ENCODE measurements at regions of chr5 and their contacts with region 1.

Region 1: DNA sequence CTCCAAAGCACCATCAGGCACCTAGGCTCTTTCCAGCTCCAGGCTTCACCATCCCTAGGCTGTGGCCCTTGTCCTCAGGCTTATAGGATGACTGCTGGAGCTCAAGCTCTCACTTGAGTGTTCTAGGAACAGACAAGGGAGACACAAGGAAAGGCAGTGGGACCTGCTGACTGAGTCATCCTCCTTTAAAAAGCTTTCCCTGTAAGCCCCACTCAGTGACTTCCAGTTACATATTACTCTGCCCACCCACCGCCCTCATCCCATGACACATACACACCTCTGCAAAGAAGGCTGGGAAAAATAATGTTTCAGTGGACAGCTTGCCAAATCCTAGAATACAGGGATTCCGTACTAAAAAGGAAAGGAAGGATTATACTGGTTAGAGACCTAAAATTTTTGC is 154.2 kb upstream of the ZNF366 start:
- DNase-seq: no peak
- H3K4me3 ChIP-seq: no peak overlapping the region
- H3K27ac ChIP-seq: no peak overlapping the region
- H3K4me1 ChIP-seq: no peaks in the 10 kb centered on the region
- H3K27me3 ChIP-seq: peaks cover 6 to 16% of the 10 kb centered on the region in 2 experiments
- CTCF ChIP-seq: no peak
- POLR2A ChIP-seq: no peak

Region 2: DNA sequence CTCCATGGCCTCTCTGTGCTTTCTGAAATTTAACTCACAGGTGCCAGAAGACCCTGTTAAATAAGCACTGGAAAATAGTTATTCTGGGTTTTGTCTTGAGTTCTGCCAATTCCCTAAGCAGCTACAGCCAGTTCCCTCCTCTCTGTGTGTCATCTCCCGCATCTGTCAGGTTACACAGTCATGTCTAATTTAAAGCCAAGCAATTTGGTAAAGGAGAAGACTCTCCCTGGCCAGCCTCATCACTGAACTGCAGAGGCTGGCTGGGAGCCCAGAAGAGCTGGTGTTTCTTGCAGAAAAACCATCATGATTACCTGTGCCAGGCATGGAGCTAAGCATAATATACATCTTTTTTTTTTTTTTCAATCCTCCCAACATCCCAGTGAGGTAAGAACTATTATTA is 12.9 kb before region 1 on chr5:
- CTCF ChIA-PET with region 1: interaction called, 10 read pairs
- POLR2A ChIA-PET with region 1: no interaction called
- dilution Hi-C with region 1: no loop called
- intact Hi-C with region 1: no loop called
- DNase-seq: no peak
- H3K4me3 ChIP-seq: no peak overlapping the region
- H3K27ac ChIP-seq: no peak overlapping the region
- H3K4me1 ChIP-seq: no peaks in the 10 kb centered on the region
- H3K27me3 ChIP-seq: no peaks in the 10 kb centered on the region
- CTCF ChIP-seq: no peak
- POLR2A ChIP-seq: no peak

Region 3: DNA sequence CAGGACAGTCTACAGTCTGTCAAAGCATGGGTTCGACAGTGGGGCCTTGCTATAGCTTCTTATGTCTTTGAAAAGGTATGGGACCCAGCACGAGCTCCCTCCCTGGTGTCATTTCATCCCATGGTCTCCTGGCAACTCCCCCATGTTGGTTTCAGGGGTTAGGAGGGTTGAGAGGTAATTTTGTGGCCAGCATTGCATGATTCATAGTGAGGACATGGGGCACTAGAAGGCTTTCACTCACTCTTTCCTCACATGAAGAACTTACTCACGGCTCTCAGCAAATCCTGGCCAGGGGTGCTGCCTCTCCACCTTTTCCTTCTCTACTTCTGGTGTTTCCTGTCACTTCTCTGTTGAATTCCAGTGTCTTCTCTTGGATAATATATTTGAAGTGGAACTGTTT is 20.4 kb after region 1 on chr5:
- CTCF ChIA-PET with region 1: no interaction called
- POLR2A ChIA-PET with region 1: no interaction called
- dilution Hi-C with region 1: no loop called
- intact Hi-C with region 1: no loop called
- DNase-seq: no peak
- H3K4me3 ChIP-seq: no peak overlapping the region
- H3K27ac ChIP-seq: no peak overlapping the region
- H3K4me1 ChIP-seq: no peaks in the 10 kb centered on the region
- H3K27me3 ChIP-seq: no peaks in the 10 kb centered on the region
- CTCF ChIP-seq: no peak
- POLR2A ChIP-seq: no peak

Measured in endothelial cell of umbilical vein (primary cell).